HEK293T (cell line): ENCODE measurements at regions of chr3 and their contacts with region 1.

Region 1: DNA sequence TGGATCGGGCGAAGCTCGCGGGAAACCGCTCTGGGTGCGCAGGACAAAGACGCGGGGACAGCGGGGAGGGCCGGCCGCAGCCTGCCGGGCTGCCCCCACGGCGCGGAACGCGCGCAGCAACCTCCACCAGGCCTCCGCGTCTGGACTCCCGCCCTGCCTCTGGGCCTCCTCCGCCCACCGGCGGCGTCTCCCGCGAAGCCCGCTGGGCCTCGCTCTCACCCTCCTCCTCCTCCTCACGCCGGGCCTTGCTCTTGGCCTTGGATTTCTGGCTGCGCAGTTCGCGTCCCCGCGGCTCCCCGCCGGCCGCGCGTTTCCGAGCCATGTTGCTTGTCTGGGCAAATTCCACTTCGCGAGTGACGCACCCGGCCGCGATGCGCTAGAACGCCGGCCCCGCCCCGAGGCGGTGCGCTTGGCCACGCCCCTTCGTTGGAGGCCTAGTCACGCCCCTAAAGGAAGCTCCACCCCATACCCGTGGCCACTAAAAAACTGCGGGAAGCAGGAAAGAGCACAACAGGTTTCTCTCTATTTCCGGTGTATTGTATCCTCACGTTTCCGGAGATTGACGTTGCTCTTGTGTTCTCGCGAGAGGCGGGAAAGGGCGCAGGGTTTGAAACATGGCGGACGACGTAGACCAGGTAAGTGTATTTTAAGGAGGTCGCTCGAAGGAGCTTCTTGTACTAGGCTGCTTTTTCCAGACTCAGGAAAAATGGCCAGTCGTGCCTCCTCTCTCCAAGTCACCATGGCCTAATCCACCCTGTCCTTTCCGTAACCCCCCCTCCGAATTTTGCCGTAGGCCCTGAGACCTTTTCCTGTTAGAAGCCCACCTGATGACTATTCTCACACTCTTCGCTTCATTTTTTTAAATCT is at the starts of genes LSM3 and XPC:
- DNase-seq: peak; percentile 93

Region 2: DNA sequence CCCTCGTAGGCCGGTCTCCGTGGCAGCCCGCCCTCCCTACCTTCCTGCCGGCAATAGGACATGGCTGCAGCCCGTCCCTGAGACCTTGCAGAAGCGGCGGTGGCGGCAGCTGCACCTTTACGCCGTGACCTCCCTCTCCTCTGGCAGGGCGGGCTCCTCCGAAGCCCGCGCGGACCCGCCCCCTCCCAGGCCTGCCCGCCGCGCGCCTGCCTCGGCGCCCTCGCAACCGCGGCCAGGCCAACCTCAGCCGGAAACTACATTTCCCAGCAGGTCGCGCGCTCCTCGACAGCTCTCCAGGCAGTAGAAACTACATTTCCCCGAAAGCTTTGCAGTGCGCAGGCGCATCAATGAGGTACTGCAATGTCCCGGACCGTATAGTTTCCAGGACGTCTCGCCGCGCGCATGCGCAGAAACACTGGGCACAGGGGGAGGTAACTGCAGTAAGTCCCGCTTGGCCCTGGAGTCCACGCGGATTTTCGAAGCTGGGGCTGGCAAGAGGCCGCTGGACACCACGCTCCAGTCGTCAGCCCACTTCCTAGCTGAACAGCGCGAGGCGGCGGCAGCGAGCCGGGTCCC is 53.8 kb before region 1 on chr3 and contains the starts of genes CHCHD4 and TMEM43:
- CTCF ChIA-PET with region 1: no interaction called
- POLR2A ChIA-PET with region 1: interaction called, 20 read pairs
- DNase-seq: peak; percentile 98

Region 3: DNA sequence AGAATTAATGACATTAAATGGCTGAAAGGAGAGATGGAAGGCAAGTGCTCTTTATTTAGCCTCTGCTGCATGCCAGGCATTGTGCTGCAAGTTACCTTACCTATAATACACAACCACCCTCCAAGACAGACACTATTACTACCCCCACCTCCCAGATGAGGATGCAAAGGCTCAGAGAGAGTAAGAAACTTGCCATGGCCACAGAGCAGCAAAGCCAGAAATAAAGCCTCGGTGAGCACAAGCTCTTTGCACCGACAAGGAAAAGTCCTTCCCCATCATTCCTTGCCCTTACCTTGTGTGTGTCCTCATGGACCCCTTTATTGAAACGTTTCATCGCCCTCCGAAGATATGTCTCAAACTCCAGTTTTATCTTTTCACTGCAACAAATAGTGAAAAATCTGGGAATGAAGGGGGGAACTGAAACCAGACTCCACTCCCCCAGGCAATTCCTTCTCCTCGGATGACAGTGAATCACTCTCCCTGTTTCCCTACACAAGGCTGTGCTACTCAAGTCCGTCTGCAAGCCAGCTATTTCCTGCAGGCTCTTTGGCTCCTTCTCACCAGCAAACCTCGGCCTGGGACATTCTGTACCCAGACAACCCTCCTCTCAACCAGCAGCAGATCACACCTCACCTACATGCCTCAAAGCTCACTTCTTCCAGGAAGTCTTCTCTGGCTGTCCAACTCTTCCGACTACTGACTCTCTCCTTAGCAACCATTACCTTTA is 11.4 kb before region 1 on chr3:
- CTCF ChIA-PET with region 1: no interaction called
- POLR2A ChIA-PET with region 1: interaction called, 10 read pairs
- DNase-seq: no peak

Region 4: GRCh38 chr3:14203521-14204079 is 25.1 kb after region 1 on chr3:
- CTCF ChIA-PET with region 1: interaction called, 4 read pairs
- POLR2A ChIA-PET with region 1: interaction called, 10 read pairs
- DNase-seq: peak; percentile 81